ENCODE measurements at regions of chr12 and their contacts with region 1.

Region 1: DNA sequence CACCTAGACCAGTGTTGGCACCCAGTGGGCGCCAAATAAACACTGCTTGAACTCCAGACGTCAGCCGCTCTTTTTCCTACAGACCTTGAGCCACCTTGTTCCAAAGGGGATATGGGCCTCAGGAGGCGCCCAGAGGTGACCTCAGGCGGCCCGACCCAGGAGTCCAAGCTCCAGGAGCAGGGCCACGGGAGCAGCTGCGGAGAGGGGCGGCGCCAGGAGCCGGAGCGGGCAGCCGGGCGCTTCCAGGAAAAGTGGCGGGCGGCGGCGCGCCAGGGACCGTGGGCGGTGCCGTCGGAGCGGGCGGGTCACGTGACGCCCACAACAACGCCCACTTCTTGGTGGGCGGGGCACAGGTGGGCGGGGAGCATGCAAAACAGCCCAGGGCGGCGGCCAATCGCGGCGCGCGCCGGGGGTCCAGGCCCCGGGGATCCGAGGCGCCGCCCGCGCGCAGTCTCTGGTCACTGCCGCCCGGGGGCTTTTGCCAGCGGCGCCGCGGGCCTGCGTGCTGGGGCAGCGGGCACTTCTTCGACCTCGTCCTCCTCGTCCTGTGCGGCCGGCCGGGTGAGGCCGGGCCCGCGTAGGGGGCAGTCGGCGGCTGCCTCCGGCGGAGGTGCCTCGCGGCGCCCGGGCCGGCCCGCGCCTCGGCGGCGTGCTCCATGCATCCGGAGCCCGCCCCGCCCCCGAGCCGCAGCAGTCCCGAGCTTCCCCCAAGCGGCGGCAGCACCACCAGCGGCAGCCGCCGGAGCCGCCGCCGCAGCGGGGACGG is at the start of gene ORAI1:
- DNase-seq: peak; percentile 95 to 99
- H3K4me3 ChIP-seq: peak within 1 kb of the TSS; percentile 86
- H3K4me3 Mint-ChIP-seq: peak within 1 kb of the TSS; percentile 84
- H3K27ac Mint-ChIP-seq: peak within 1 kb of the TSS; percentile 90
- H3K4me1 ChIP-seq: peaks cover 21% of the 10 kb centered on the region
- H3K4me1 Mint-ChIP-seq: peaks cover 7% of the 10 kb centered on the region
- H3K27me3 ChIP-seq: no peaks in the 10 kb centered on the region
- H3K27me3 Mint-ChIP-seq: no peaks in the 10 kb centered on the region
- CTCF ChIP-seq: no peak
- total RNA-seq, gene ORAI1: 33.9 and 34.2 TPM in 2 replicates

Region 2: DNA sequence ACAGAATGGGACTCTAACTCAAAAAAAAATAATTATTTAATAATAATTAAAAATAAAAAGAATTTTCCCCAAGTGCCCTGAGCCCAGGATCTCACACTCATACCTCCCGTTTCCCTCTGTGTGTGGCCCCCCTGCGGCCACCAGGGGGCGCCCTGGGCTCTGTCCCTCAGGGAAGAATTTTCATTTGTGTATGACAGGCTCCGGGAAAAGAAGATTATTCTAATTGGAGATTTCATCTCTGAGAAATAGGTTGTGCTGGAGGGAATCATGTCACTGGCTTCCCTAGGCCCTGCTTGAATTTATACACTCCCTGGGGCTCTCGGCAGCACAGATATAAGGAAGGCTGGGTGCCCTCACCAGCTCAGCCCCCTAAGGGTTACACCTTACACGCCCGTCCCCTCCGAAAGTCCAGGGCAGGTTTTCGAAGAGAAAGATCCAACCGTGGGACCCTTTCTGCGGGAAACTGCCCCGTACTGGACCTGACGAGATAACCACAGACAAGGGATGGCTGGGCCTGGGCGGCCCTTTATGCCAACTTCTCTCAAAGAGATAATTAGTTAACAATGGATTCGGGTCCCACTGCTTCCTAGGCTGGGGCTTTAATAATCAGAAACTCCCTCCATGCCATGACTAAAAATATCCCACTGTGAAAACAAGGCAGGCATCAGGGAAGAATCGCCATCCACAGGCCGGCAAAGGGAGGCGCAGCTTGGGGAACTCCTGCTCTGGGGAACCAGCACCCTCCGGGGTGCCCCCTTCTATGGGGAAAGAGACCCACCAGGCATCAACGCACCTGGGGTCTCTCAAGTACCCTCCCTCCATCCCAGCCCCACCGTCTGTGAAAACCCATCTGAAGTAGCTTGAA is 126.1 kb before region 1 on chr12:
- CTCF ChIA-PET with region 1: no interaction called
- POLR2A ChIA-PET with region 1: no interaction called
- intact Hi-C with region 1: loop called (anchors 1 kb)
- DNase-seq: peak; percentile 61 to 80
- H3K4me3 ChIP-seq: no peak overlapping the region
- H3K4me3 Mint-ChIP-seq: no peak overlapping the region
- H3K27ac Mint-ChIP-seq: no peak overlapping the region
- H3K4me1 ChIP-seq: no peaks in the 10 kb centered on the region
- H3K4me1 Mint-ChIP-seq: no peaks in the 10 kb centered on the region
- H3K27me3 ChIP-seq: no peaks in the 10 kb centered on the region
- H3K27me3 Mint-ChIP-seq: no peaks in the 10 kb centered on the region
- CTCF ChIP-seq: peak; percentile 97

Region 3: DNA sequence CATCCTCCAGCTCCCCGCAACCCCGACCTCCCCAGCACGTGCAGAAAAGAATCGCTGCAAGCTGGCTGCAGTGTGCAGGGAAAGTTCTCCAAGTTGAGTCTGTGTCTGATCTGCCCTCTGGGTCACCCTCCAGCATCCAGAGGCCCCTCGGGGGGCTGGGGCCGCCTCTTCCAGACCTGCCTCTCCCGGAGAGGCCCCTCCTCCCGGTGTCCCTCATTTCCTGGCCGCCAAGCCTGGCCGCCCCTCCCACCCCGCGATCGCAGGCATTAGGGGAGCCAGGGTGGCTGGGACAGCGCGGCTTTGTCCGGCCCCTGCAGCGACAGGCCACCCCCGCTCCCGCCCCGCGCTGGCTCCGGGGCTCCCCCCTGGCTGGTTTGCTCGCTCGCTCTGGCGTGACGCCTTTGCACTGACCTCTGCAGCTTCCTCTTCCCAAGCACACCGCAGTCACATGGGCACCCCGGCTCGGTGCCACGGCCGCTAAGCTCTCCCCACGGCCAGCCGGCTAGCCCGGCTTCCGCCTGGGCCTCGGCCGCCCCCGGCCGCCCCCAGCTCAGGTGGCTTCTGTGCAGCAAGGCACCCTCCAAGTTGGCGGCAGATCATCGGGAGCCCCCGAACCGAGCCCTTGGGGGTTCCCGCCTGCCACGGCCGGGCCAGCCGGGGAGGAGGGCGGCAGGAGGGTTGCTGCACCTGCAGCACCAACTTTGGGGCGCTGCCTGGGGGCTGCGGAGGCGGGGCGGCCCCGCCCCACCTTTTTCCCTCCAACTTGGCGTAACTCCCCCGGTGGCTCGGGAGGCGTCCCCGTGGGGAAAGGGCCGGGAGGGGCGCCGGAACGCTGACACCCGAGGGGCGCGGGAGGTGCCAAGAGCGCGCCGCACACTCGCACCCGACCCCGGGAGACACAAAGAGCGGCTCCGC is 89.1 kb before region 1 on chr12:
- CTCF ChIA-PET with region 1: interaction called, 10 read pairs
- POLR2A ChIA-PET with region 1: no interaction called
- intact Hi-C with region 1: no loop called
- DNase-seq: peak; percentile 79 to 85
- H3K4me3 ChIP-seq: peak overlapping the region; percentile 65
- H3K4me3 Mint-ChIP-seq: peak overlapping the region; percentile 70
- H3K27ac Mint-ChIP-seq: peak overlapping the region; percentile 45
- H3K4me1 ChIP-seq: peaks cover 21% of the 10 kb centered on the region
- H3K4me1 Mint-ChIP-seq: peaks cover 17% of the 10 kb centered on the region
- H3K27me3 ChIP-seq: no peaks in the 10 kb centered on the region
- H3K27me3 Mint-ChIP-seq: no peaks in the 10 kb centered on the region
- CTCF ChIP-seq: no peak

Region 4: DNA sequence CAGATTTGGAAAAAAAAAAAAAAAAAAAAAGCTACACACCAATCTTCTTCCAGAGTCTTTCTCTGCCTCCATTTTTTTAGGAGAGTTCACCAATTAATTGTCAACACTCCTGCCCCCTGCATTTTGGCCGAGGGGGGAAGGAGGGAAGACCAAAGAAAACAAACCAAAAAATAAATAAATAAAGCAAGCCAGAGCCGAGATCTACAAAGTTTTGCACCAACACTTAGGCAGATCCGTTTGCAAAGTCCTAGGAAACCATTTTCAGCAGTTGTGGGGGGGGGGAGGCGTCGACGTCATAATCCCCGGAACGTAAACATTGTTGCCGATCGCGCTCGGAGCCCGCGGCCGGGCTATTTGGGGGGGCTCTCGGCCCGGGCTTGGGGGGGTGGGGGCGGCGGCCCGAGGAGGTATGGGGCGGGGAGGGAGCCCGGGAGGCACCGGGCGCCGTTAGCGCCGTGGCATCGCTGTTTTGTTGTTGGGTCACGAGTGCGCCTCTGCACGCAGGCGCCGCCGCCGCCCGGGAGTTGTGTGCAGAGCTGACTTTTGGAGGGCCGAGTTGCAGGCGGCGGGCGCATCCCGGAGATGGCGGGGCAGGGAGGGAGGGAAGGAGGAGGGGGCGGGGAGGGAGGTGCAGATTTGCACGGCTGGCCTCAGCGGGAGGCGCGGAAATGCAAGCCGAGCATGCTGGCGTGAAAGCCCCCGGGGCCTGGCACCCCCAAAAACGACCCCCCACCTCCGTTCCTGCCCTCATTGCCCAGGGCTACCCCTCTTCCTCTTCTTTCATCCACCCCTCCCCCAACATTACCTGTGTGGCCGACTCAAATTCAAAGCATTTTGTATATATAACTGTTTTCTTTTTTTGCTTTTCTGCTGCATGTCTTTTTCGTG is 46.0 kb before region 1 on chr12:
- CTCF ChIA-PET with region 1: interaction called, 19 read pairs
- POLR2A ChIA-PET with region 1: interaction called, 8 read pairs
- intact Hi-C with region 1: loop called (anchors 1 kb)
- DNase-seq: peak; percentile 81 to 85
- H3K4me3 ChIP-seq: peak overlapping the region; percentile 76
- H3K4me3 Mint-ChIP-seq: peak overlapping the region; percentile 93
- H3K27ac Mint-ChIP-seq: peak overlapping the region; percentile 96
- H3K4me1 ChIP-seq: peaks cover 53% of the 10 kb centered on the region
- H3K4me1 Mint-ChIP-seq: peaks cover 20% of the 10 kb centered on the region
- H3K27me3 ChIP-seq: no peaks in the 10 kb centered on the region
- H3K27me3 Mint-ChIP-seq: no peaks in the 10 kb centered on the region
- CTCF ChIP-seq: no peak

Region 5: DNA sequence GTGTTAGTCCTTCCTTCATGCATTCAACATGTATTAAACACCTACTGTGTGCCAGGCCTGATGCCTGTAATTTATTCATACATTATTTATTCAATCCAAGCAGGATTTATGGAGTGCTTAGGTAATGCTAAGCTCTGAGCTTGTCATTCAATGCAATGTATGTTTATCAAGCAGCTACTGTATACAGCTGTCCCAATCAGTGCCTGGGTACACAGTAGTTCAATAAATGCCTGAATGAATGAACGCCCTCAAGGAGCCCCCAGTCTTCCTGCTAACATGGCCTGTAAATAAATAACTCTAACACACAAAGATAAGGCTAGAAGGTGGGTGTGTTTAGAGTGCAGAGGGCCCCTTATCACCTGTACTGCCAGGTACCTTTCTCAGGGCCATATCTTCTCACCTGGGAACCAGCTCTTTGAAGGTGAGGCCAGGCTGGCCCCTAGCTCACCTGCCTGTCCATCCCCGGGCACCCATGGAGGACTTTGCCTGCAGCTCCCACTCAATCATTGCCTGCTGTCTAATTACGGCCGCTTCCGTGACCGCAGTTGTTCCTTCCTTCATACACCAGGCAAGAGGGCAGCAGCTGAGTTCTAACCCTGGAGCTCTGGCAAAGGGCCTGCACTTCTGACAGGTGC is 25.5 kb before region 1 on chr12:
- CTCF ChIA-PET with region 1: interaction called, 8 read pairs
- POLR2A ChIA-PET with region 1: interaction called, 8 read pairs
- intact Hi-C with region 1: loop called (anchors 1 kb)
- DNase-seq: peak; percentile 89 to 97
- H3K4me3 ChIP-seq: no peak overlapping the region
- H3K4me3 Mint-ChIP-seq: peak overlapping the region; percentile 15
- H3K27ac Mint-ChIP-seq: peak overlapping the region; percentile 76
- H3K4me1 ChIP-seq: peaks cover 47% of the 10 kb centered on the region
- H3K4me1 Mint-ChIP-seq: peaks cover 26% of the 10 kb centered on the region
- H3K27me3 ChIP-seq: no peaks in the 10 kb centered on the region
- H3K27me3 Mint-ChIP-seq: no peaks in the 10 kb centered on the region
- CTCF ChIP-seq: no peak

Region 6: GRCh38 chr12:121668750-121669520 is 42.7 kb after region 1 on chr12:
- CTCF ChIA-PET with region 1: interaction called, 30 read pairs
- POLR2A ChIA-PET with region 1: interaction called, 11 read pairs
- intact Hi-C with region 1: loop called (anchors 2 kb)
- DNase-seq: peak; percentile 72
- H3K4me3 ChIP-seq: peak overlapping the region; percentile 33
- H3K4me3 Mint-ChIP-seq: peak overlapping the region; percentile 86
- H3K27ac Mint-ChIP-seq: peak overlapping the region; percentile 91
- H3K4me1 ChIP-seq: peaks cover 23% of the 10 kb centered on the region
- H3K4me1 Mint-ChIP-seq: peaks cover 17% of the 10 kb centered on the region
- H3K27me3 ChIP-seq: no peaks in the 10 kb centered on the region
- H3K27me3 Mint-ChIP-seq: no peaks in the 10 kb centered on the region
- CTCF ChIP-seq: peak; percentile 61 to 82

Region 7: DNA sequence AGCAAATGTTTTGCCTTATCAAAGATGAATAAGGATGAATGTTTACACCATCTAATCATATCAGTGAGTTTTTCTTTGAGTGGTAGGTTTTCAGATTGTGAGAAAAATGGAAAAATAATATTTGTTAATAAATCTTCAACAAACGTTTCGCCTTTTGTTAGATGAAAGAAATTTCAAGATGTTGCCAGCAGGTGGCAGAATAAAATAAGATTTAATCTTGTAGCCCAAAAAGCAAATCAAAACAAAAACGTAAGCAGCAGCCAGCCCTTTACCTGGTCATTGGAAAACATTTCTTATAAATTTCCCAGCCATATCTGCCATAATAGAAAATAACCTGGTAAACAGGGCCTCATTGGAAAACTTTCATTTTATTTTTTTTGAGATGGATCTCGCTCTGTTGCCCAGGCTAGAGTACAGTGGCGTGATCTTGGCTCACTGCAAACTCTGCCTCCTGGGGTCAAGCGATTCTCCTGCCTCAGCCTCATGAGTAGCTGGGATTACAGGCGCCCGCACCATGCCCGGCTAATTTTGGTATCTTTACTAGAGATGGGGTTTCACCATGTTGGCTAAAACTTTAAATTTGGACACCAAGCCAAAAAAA is 70.9 kb after region 1 on chr12:
- CTCF ChIA-PET with region 1: interaction called, 3 read pairs
- POLR2A ChIA-PET with region 1: interaction called, 12 read pairs
- intact Hi-C with region 1: no loop called
- DNase-seq: peak in 1 of 2 experiments; percentile 59
- H3K4me3 ChIP-seq: no peak overlapping the region
- H3K4me3 Mint-ChIP-seq: no peak overlapping the region
- H3K27ac Mint-ChIP-seq: no peak overlapping the region
- H3K4me1 ChIP-seq: no peaks in the 10 kb centered on the region
- H3K4me1 Mint-ChIP-seq: no peaks in the 10 kb centered on the region
- H3K27me3 ChIP-seq: no peaks in the 10 kb centered on the region
- H3K27me3 Mint-ChIP-seq: no peaks in the 10 kb centered on the region
- CTCF ChIP-seq: peak; percentile 33 to 52

Measured in Caco-2 (cell line).